Gastrocnemius medialis (tissue), 4 donors: ENCODE measurements at regions of chr1 and their contacts with region 1.

Region 1: GRCh38 chr1:62746085-62746808 is 37.7 kb upstream of the ATG4C start:
- DNase-seq: no peak
- ATAC-seq: peak in 1 of 2 donors; percentile 39
- H3K4me3 ChIP-seq: no peak overlapping the region
- H3K27ac ChIP-seq: no peak overlapping the region
- H3K4me1 ChIP-seq: peaks cover 4 to 5% of the 10 kb centered on the region in 2 donors
- H3K27me3 ChIP-seq: no peaks in the 10 kb centered on the region
- CTCF ChIP-seq: peak in 3 of 5 experiments; percentile 34 to 57 (median 55)
- POLR2A ChIP-seq: no peak

Region 2: DNA sequence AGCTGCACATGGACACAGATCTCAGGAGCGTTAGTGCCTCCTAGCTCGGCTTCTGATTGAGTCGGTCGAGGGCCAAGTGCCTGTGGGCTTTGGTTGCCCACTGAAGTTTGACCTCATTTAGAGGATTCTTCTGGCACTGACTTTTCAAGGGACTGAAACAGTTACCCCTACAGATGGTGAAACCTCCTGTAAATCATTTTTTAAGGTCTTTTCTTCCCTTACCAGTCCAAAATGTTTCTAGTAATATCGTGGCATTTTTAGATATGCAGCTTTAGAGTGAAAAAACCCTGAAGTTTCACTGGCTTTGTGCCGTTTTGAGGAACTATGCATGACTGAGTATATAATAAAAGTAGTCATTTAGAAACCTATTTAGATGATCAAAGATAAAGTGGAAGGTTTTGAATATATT is 586.3 kb before region 1 on chr1:
- in situ Hi-C with region 1: loop called in 1 of 4 experiments (anchors 25 kb)
- intact Hi-C with region 1: no loop called
- DNase-seq: no peak
- ATAC-seq: no peak
- H3K4me3 ChIP-seq: no peak overlapping the region
- H3K27ac ChIP-seq: no peak overlapping the region
- H3K4me1 ChIP-seq: no peaks in the 10 kb centered on the region
- H3K27me3 ChIP-seq: no peaks in the 10 kb centered on the region
- CTCF ChIP-seq: no peak
- POLR2A ChIP-seq: no peak

Region 3: GRCh38 chr1:62175568-62176179 is 570.6 kb before region 1 on chr1:
- in situ Hi-C with region 1: loop called in 3 of 4 experiments (anchors 25 kb)
- intact Hi-C with region 1: loop called (anchors 5 kb)
- DNase-seq: peak in 1 of 2 donors; percentile 4
- ATAC-seq: no peak
- H3K4me3 ChIP-seq: no peak overlapping the region
- H3K27ac ChIP-seq: no peak overlapping the region
- H3K4me1 ChIP-seq: no peaks in the 10 kb centered on the region
- H3K27me3 ChIP-seq: peaks cover 0 to 3% (median 0%) of the 10 kb centered on the region in 3 donors
- CTCF ChIP-seq: peak; percentile 25 to 68 (median 53)
- POLR2A ChIP-seq: no peak

Region 4: DNA sequence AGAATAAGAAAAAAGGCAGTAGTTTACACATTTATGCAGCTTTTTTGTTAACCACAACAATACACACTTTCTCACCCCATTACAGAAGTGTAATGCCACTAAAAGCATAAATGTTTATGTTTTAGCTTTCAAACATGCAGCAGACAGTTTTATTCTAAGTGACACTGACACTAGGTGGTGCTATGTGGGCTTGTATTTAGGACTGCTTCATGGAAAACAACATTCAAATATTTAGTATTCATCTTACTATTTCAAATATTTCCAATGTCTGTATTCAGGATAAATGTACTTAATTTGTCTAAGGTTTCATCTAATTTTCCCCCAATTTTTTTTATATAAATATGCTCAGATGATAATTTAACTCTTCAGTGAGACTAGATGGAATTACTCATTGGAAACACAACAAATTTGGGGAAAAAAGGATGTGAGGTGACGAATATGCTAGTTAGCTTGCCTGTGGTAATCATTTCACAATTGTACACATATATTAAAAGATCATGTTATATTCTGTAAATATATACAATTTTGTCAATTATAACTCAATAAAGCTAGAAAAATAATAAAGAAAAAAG is 238.0 kb before region 1 on chr1:
- in situ Hi-C with region 1: loop called (anchors 5 to 10 kb)
- intact Hi-C with region 1: loop called (anchors 1 kb)
- DNase-seq: no peak
- ATAC-seq: no peak
- H3K4me3 ChIP-seq: no peak overlapping the region
- H3K27ac ChIP-seq: no peak overlapping the region
- H3K4me1 ChIP-seq: no peaks in the 10 kb centered on the region
- H3K27me3 ChIP-seq: no peaks in the 10 kb centered on the region
- CTCF ChIP-seq: peak in 3 of 5 experiments; percentile 27 to 46 (median 37)
- POLR2A ChIP-seq: no peak

Region 5: DNA sequence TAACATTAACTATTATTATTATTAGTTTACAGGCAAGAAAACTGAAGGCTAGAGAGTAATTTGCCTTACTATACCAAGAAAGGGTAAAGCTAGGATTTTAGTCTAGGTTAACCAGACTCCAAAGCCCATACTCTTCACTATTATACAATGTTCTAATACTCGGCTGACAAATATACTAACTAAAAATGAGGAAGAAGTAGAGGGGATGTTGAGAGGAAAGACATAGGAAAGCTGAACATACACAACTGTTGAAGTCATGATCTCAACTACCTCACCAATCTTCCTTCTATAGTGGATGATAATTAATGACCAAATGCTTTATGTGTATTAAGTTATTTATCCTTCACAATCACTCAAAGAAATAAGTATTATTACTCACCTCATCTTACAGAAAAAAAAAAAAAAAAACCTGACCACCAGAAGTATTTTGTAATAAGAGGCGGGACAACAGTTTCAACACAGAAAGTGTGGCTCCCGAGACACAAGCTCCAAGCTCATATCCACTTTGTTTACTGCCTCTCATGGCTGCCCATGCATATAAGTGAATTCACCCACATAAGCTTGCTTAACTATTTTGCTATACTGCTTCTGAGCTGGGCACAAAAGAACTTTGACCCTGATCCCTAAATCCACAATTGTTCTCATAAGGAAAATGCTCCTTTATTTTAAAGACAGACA is 231.4 kb before region 1 on chr1:
- in situ Hi-C with region 1: loop called in 2 of 4 experiments (anchors 10 kb)
- intact Hi-C with region 1: no loop called
- DNase-seq: no peak
- ATAC-seq: no peak
- H3K4me3 ChIP-seq: no peak overlapping the region
- H3K27ac ChIP-seq: no peak overlapping the region
- H3K4me1 ChIP-seq: no peaks in the 10 kb centered on the region
- H3K27me3 ChIP-seq: no peaks in the 10 kb centered on the region
- CTCF ChIP-seq: no peak
- POLR2A ChIP-seq: no peak